IMR-90 (cell line): ENCODE measurements at regions of chr2 and their contacts with region 1.

Region 1: DNA sequence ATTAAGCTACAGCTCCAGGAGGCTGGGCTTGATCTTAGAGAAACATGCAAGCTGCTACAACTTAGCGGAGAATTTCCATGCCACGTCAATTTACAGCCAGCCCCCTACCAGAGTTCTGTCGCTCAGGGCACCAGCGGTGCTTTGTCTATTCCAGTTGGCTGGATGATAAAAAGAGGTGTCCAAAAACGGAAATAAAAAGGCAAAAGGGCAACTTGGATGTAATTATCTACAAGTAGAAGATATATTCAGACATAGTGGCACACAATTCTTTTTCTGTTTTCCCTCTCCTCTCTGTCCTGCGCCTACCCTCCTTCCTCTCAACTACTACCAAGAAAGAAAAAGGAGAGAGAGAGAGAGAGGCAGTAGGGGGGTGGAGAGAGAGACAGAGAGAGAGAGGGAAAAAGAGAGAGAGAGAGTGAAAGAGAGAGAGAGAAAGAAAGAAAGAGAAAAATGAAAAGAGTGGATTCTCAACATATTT is 363 bp upstream of the RFTN2 start:
- DNase-seq: peak; percentile 76
- ATAC-seq: peak; percentile 69
- H3K4me3 ChIP-seq: peak overlapping the region; percentile 53
- H3K27ac ChIP-seq: peak overlapping the region; percentile 100
- H3K4me1 ChIP-seq: peaks cover 2% of the 10 kb centered on the region; the same call in 1 of the 2 replicates
- H3K27me3 ChIP-seq: no peaks in the 10 kb centered on the region
- CTCF ChIP-seq: no peak
- POLR2A ChIP-seq: no peak
- RAD21 ChIP-seq: no peak

Region 2: DNA sequence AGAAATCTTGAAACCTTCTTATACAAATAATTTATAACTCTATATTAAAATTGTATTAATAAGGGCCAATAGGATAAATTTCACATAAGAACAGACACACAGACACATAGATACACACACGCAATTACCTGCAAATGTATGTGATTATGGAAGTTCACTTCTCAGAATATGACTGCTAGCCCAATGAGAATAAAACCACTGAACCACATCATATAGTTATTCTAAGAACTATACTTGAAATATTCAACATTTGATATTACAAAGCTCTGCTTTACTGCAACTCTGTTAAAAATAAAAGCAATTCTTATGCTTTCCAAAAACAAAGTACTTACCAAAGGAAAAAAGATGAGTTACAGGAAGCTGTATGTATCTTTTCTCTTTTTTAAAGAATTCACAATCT is 800.3 kb before region 1 on chr2:
- CTCF ChIA-PET with region 1: no interaction called
- POLR2A ChIA-PET with region 1: interaction called, 21 read pairs
- dilution Hi-C with region 1: no loop called
- in situ Hi-C with region 1: no loop called
- intact Hi-C with region 1: no loop called
- DNase-seq: no peak
- ATAC-seq: no peak
- H3K4me3 ChIP-seq: no peak overlapping the region
- H3K27ac ChIP-seq: no peak overlapping the region
- H3K4me1 ChIP-seq: no peaks in the 10 kb centered on the region
- H3K27me3 ChIP-seq: no peaks in the 10 kb centered on the region
- CTCF ChIP-seq: no peak
- POLR2A ChIP-seq: no peak
- RAD21 ChIP-seq: no peak

Region 3: GRCh38 chr2:197515739-197516392 is 159.9 kb before region 1 on chr2 and contains the start of gene MOB4:
- CTCF ChIA-PET with region 1: no interaction called
- POLR2A ChIA-PET with region 1: interaction called, 4 read pairs
- dilution Hi-C with region 1: no loop called
- in situ Hi-C with region 1: no loop called
- intact Hi-C with region 1: loop called (anchors 5 kb)
- DNase-seq: peak; percentile 93
- ATAC-seq: peak; percentile 99
- H3K4me3 ChIP-seq: peak within 1 kb of the TSS; percentile 80
- H3K27ac ChIP-seq: peak within 1 kb of the TSS; percentile 93
- H3K4me1 ChIP-seq: peaks cover 4% of the 10 kb centered on the region; the same call in 1 of the 2 replicates
- H3K27me3 ChIP-seq: no peaks in the 10 kb centered on the region
- CTCF ChIP-seq: no peak
- POLR2A ChIP-seq: peak; percentile 88
- RAD21 ChIP-seq: no peak
- total RNA-seq, gene MOB4: 34.8 and 69.4 TPM in 2 replicates

Region 4: DNA sequence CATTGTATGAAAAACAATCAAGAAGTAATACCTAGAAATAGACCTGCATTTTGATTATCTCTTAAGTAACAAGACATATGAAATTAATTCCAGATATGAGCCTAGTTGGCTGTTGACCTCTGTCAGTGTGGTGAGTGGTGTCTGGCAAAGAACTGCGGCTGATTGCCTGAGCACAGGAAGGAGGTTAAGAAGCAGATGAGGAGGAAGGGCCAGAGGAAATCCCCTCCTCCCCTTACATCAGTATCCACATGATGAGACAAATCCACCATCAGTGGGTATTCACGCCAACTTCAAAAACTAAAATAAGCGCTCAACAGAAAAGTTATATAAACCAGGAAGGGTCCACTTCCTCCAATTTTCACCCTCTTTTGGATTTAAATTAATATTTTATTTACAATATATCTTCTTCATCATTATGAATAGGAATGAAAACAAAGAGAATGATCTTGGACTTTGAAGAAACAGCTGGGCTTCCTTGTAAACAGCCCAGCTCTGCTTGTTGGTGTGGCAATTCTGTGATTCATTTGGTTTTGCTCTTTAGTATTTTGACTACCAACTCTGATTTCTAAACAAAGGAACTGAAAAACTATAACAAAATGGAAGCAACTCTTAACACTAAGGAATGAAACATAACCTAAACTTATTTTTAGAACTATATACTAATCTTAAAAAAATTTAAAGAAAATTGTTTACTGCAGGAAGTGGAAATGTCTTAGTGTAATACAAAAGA is 27.6 kb before region 1 on chr2:
- CTCF ChIA-PET with region 1: no interaction called
- POLR2A ChIA-PET with region 1: interaction called, 3 read pairs
- dilution Hi-C with region 1: no loop called
- in situ Hi-C with region 1: no loop called
- intact Hi-C with region 1: loop called (anchors 2 kb)
- DNase-seq: peak; percentile 85
- ATAC-seq: peak; percentile 94
- H3K4me3 ChIP-seq: no peak overlapping the region
- H3K27ac ChIP-seq: peak overlapping the region; percentile 94; the same call in 1 of the 2 replicates
- H3K4me1 ChIP-seq: peaks cover 7% of the 10 kb centered on the region
- H3K27me3 ChIP-seq: no peaks in the 10 kb centered on the region
- CTCF ChIP-seq: no peak
- POLR2A ChIP-seq: no peak
- RAD21 ChIP-seq: no peak